CD8-positive, alpha-beta memory T cell (primary cell): ENCODE measurements at regions of chr18 and their contacts with region 1.

Region 1: DNA sequence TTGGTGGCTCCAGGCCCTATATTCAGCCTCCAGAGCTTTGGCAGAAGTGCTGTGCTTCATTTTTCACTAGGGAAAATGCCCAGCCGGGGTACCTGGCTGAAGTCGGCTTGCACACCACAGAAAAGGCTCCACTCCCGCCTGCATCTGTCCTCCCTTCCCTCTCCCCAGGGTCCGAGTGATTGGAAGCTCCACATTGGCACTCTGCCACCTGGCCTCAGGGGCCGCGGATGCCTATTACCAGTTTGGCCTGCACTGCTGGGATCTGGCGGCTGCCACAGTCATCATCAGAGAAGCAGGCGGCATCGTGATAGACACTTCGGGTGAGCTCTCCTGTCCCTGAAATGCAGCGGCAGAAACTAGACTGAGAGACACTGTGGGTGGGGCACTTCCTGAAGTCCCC is 47.4 kb downstream of the IMPA2 start:
- DNase-seq: no peak
- H3K4me3 ChIP-seq: no peak overlapping the region
- H3K4me3 Mint-ChIP-seq: no peak overlapping the region
- H3K27ac ChIP-seq: no peak overlapping the region
- H3K27ac Mint-ChIP-seq: no peak overlapping the region
- H3K4me1 ChIP-seq: no peaks in the 10 kb centered on the region
- H3K4me1 Mint-ChIP-seq: no peaks in the 10 kb centered on the region
- H3K27me3 ChIP-seq: no peaks in the 10 kb centered on the region
- H3K27me3 Mint-ChIP-seq: peaks cover 0 to 3% of the 10 kb centered on the region in 2 donors

Region 2: GRCh38 chr18:11785458-11786055 is 243.1 kb before region 1 on chr18:
- CTCF ChIA-PET with region 1: no interaction called
- POLR2A ChIA-PET with region 1: no interaction called
- DNase-seq: no peak
- H3K4me3 ChIP-seq: no peak overlapping the region
- H3K4me3 Mint-ChIP-seq: no peak overlapping the region
- H3K27ac ChIP-seq: no peak overlapping the region
- H3K27ac Mint-ChIP-seq: no peak overlapping the region
- H3K4me1 ChIP-seq: no peaks in the 10 kb centered on the region
- H3K4me1 Mint-ChIP-seq: no peaks in the 10 kb centered on the region
- H3K27me3 ChIP-seq: no peaks in the 10 kb centered on the region
- H3K27me3 Mint-ChIP-seq: peaks cover 5 to 42% of the 10 kb centered on the region in 2 donors

Region 3: GRCh38 chr18:12015416-12016062 is 13.1 kb before region 1 on chr18:
- CTCF ChIA-PET with region 1: no interaction called
- POLR2A ChIA-PET with region 1: no interaction called
- DNase-seq: no peak
- H3K4me3 ChIP-seq: no peak overlapping the region
- H3K4me3 Mint-ChIP-seq: no peak overlapping the region
- H3K27ac ChIP-seq: no peak overlapping the region
- H3K27ac Mint-ChIP-seq: no peak overlapping the region
- H3K4me1 ChIP-seq: no peaks in the 10 kb centered on the region
- H3K4me1 Mint-ChIP-seq: no peaks in the 10 kb centered on the region
- H3K27me3 ChIP-seq: no peaks in the 10 kb centered on the region
- H3K27me3 Mint-ChIP-seq: peaks cover 0 to 1% of the 10 kb centered on the region in 2 donors

Region 4: DNA sequence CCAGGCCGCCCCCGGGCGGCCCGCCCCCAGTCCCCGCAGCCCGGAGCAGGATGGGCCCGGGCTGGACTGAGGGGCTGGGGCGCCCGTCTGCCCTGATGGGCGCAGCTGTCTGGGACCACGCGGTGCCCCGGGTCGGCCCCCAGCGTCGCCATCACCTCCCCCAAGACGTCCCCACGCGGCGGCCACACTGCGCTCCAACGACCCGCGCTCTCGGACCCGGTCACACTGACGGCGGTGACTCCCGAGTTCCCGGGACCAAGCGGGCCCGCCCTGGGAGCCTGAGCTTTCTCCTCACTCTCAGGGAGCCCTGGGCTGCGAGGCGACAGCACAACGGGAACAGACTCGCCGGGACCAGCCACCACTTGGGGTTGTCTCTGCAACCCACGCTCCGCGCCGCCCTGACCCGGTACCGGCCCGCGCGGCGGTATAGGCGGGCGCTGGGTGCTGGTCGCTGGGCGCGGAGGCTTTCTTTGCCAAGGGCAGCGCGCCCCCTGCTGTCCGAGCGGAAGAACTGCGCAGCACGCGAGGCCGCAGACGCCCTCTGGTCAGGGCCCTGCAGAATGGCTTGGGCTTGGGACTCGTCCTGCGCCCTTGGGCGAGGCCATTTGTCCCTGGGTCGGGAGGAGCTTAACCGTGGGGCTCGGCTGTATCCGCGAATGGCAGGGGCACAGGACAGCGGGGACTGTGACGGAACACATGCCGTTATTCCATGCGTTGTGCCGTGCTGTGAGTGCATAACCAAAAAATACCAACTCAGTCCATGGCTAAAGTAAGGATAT is 10.2 kb after region 1 on chr18:
- CTCF ChIA-PET with region 1: interaction called, 11 read pairs
- POLR2A ChIA-PET with region 1: no interaction called
- DNase-seq: peak; percentile 61 to 72 (median 64)
- H3K4me3 ChIP-seq: no peak overlapping the region
- H3K4me3 Mint-ChIP-seq: peak overlapping the region; percentile 54 to 91 (median 64)
- H3K27ac ChIP-seq: no peak overlapping the region
- H3K27ac Mint-ChIP-seq: no peak overlapping the region
- H3K4me1 ChIP-seq: no peaks in the 10 kb centered on the region
- H3K4me1 Mint-ChIP-seq: peaks cover 0 to 8% (median 0%) of the 10 kb centered on the region in 3 donors
- H3K27me3 ChIP-seq: peaks cover 3% of the 10 kb centered on the region
- H3K27me3 Mint-ChIP-seq: peaks cover 16 to 18% of the 10 kb centered on the region in 2 donors